Cardiac septum (tissue), 1 donor: ENCODE measurements at regions of chr11 and their contacts with region 1.

Region 1: GRCh38 chr11:66222358-66223149 is 45.9 kb upstream of the RAB1B start:
- DNase-seq: peak; percentile 95

Region 2: DNA sequence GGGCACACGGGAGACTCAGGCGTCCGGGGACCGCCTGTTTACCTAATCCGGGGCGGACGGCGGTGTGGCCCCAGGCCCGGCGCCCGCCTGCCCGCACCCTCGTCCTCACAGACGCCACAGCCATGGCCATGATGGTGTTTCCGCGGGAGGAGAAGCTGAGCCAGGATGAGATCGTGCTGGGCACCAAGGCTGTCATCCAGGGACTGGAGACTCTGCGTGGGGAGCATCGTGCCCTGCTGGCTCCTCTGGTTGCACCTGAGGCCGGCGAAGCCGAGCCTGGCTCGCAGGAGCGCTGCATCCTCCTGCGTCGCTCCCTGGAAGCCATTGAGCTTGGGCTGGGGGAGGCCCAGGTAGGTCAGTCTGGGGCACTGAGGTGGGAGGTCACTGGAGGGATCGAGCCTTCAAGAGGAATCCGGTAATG is 35.9 kb after region 1 on chr11:
- intact Hi-C with region 1: loop called (anchors 1 kb)
- DNase-seq: no peak

Region 3: DNA sequence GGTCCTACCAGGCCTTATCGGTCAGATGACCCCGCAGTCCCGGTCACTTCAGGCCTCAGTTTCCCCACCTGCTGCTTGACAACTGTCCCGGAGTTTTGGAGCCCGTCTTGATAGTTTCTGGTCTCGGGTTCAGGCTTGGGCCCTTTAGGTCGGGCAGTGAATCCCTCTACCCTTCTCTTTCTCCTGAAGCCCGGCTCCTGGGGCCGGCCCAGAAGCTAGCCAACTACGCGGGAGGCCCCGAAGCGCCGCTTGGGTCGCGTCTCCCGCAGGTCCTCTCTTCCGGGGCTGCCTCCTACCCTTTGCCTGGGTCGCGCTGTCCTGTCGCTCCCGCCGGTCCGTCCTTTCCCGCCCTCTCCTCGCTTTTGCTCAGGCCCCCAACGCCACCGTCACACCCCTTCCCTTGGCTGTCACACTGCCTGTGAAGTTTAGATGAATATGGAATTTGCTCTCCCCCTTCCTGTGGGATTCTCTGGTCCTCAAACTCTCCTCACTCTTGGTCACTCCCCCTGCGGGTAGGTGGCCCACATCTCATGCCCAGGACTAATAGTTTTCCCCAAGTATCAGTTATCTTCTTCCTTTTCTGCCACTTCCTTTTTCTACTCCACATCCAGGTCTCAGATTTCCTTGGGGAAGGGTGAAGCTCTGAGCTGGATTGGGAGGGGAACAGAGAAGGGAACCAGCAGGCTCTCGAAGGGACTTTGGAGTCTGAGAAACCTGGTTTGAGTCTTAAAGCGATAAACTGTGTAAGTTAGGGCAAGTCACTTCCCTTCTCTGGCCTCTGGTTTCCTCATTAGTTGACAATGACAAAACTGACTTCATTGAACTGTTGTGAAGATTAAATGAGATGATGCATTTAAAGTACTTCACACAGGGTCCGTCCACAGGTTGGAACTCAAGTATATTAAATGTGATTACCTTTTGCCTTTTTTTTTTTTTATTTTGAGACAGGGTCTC is 46.7 kb after region 1 on chr11:
- intact Hi-C with region 1: no loop called
- DNase-seq: no peak